CD4-positive, alpha-beta T cell (primary cell): ENCODE measurements at regions of chr10 and their contacts with region 1.

Region 1: DNA sequence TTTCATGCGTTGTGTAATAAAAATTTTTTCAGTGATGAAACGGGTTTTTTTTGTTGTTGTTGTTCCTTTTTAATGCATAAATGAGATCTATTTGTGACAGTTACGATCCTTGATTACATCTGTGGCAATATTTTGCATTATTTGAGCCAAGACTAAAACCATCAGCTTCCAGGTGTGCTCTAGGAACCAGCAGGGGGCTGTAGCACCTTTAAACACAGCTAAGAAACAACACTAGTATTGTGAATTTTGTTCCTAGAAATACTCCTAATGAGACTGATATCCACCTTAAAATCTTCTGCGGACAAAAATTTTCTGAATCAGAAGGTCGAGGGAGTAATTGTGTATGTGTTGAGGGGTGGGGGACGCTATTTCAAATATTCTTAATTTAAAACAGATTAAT is 52.6 kb downstream of the FGFBP3 start:
- DNase-seq: peak in 6 of 14 experiments; percentile 2 to 30 (median 14)
- ATAC-seq: no peak
- H3K4me3 ChIP-seq: no peak overlapping the region
- H3K4me3 Mint-ChIP-seq: no peak overlapping the region
- H3K27ac ChIP-seq: no peak overlapping the region
- H3K27ac Mint-ChIP-seq: no peak overlapping the region
- H3K4me1 ChIP-seq: no peaks in the 10 kb centered on the region
- H3K4me1 Mint-ChIP-seq: no peaks in the 10 kb centered on the region
- H3K27me3 ChIP-seq: no peaks in the 10 kb centered on the region
- H3K27me3 Mint-ChIP-seq: no peaks in the 10 kb centered on the region
- CTCF ChIP-seq: no peak

Region 2: GRCh38 chr10:91820144-91820543 is 36.5 kb before region 1 on chr10:
- CTCF ChIA-PET with region 1: no interaction called
- POLR2A ChIA-PET with region 1: no interaction called
- intact Hi-C with region 1: loop called in 1 of 2 experiments (anchors 5 kb)
- DNase-seq: no peak
- ATAC-seq: no peak
- H3K4me3 ChIP-seq: no peak overlapping the region
- H3K4me3 Mint-ChIP-seq: no peak overlapping the region
- H3K27ac ChIP-seq: no peak overlapping the region
- H3K27ac Mint-ChIP-seq: no peak overlapping the region
- H3K4me1 ChIP-seq: no peaks in the 10 kb centered on the region
- H3K4me1 Mint-ChIP-seq: peaks cover 9% of the 10 kb centered on the region
- H3K27me3 ChIP-seq: no peaks in the 10 kb centered on the region
- H3K27me3 Mint-ChIP-seq: no peaks in the 10 kb centered on the region
- CTCF ChIP-seq: no peak